ENCODE measurements at regions of chr19 and their contacts with region 1.

Region 1: GRCh38 chr19:22918238-22918637 is 84.7 kb downstream of the ZNF728 start:
- DNase-seq: no peak
- ATAC-seq: no peak
- H3K4me3 ChIP-seq: no peak overlapping the region
- H3K27ac ChIP-seq: no peak overlapping the region
- H3K4me1 ChIP-seq: no peaks in the 10 kb centered on the region
- H3K27me3 ChIP-seq: no peaks in the 10 kb centered on the region
- CTCF ChIP-seq: no peak
- EP300 ChIP-seq: no peak
- POLR2A ChIP-seq: no peak
- RAD21 ChIP-seq: no peak

Region 2: DNA sequence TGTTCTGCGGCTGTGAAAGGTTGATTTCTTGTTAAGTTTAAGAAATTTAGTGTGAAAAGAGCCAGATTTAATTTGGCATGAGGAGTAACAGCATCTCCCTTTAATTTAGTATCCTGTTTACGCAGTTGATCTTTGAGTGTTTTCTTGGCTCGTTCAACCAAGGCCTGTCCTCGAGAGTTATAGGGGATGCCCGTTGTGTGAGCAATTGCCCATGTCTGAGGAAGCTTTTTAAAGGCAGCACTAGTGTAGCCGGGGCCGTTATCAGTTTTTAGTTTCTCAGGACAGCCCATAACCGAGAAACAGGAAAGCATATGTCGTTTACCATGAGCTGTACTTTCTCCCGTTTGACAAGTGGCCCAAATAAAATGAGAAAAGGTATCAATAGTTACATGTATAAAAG is 1034.7 kb before region 1 on chr19:
- CTCF ChIA-PET with region 1: no interaction called
- POLR2A ChIA-PET with region 1: no interaction called
- in situ Hi-C with region 1: loop called (anchors 5 kb)
- intact Hi-C with region 1: no loop called
- DNase-seq: no peak
- ATAC-seq: no peak
- H3K4me3 ChIP-seq: no peak overlapping the region
- H3K27ac ChIP-seq: no peak overlapping the region
- H3K4me1 ChIP-seq: no peaks in the 10 kb centered on the region
- H3K27me3 ChIP-seq: no peaks in the 10 kb centered on the region
- CTCF ChIP-seq: no peak
- EP300 ChIP-seq: no peak
- POLR2A ChIP-seq: no peak
- RAD21 ChIP-seq: no peak

Measured in K562 (cell line).